Activated CD8-positive, alpha-beta memory T cell treated with anti-CD3 and anti-CD28 coated beads, Interleukin-2, amount 10 ng/mL, durations not matched to agents 7 days and 5 days (primary cell): ENCODE measurements at regions of chr5 and their contacts with region 1.

Region 1: DNA sequence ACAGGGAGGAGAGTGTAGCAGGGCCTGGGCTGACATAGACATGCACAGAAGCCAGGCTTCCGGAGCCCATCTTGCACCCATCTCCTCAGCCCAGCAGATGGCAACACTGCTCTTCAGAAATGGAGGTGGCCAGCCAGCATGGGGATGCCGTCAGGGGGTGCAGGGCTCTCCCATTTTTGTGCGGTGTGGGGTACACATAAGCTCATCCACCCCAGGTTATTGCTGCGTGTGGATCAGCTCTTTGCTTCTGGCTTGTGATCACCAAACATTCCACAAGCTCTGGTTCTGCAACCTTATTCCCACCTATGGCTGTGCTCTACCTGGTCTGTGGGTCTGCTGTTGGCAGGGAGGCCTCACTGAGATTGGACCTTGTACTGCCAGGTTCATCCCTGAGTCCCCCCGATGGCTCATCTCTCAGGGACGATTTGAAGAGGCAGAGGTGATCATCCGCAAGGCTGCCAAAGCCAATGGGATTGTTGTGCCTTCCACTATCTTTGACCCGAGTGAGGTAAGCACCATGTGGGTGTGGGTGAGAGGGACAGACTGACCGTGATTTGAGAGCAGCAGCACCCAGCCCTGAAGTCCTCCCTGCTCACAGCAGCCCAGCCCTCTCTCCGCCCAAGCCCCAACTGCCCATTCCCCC is 17.3 kb downstream of the SLC22A5 start:
- DNase-seq: peak; percentile 88
- ATAC-seq: peak; percentile 96
- H3K4me3 Mint-ChIP-seq: no peak overlapping the region
- H3K27ac Mint-ChIP-seq: peak overlapping the region; percentile 69
- H3K4me1 Mint-ChIP-seq: peaks cover 50% of the 10 kb centered on the region
- H3K27me3 Mint-ChIP-seq: no peaks in the 10 kb centered on the region

Region 2: GRCh38 chr5:132260714-132261551 is 125.8 kb before region 1 on chr5:
- CTCF ChIA-PET with region 1: no interaction called
- DNase-seq: peak; percentile 41
- ATAC-seq: peak; percentile 21
- H3K4me3 Mint-ChIP-seq: no peak overlapping the region
- H3K27ac Mint-ChIP-seq: no peak overlapping the region
- H3K4me1 Mint-ChIP-seq: peaks cover 20% of the 10 kb centered on the region
- H3K27me3 Mint-ChIP-seq: peaks cover 13% of the 10 kb centered on the region

Region 3: DNA sequence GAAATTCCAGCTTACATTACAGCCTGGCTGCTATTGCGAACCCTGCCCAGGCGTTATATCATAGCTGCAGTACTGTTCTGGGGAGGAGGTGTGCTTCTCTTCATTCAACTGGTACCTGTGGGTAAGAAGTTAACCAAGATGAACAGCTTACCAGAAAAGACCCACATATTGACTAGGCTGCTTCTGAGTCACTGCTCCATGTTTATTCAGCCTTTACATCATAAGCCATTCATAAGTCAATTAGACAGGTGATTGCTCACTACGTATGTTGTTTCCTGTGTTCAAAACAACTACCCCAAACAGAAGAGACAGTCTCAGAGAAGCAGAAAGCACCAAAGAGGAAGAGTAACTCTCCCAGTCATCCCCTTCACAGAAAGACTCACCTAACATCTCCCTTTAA is 52.0 kb before region 1 on chr5:
- CTCF ChIA-PET with region 1: no interaction called
- DNase-seq: no peak
- ATAC-seq: peak; percentile 64
- H3K4me3 Mint-ChIP-seq: no peak overlapping the region
- H3K27ac Mint-ChIP-seq: peak overlapping the region; percentile 35
- H3K4me1 Mint-ChIP-seq: peaks cover 6% of the 10 kb centered on the region
- H3K27me3 Mint-ChIP-seq: no peaks in the 10 kb centered on the region

Region 4: DNA sequence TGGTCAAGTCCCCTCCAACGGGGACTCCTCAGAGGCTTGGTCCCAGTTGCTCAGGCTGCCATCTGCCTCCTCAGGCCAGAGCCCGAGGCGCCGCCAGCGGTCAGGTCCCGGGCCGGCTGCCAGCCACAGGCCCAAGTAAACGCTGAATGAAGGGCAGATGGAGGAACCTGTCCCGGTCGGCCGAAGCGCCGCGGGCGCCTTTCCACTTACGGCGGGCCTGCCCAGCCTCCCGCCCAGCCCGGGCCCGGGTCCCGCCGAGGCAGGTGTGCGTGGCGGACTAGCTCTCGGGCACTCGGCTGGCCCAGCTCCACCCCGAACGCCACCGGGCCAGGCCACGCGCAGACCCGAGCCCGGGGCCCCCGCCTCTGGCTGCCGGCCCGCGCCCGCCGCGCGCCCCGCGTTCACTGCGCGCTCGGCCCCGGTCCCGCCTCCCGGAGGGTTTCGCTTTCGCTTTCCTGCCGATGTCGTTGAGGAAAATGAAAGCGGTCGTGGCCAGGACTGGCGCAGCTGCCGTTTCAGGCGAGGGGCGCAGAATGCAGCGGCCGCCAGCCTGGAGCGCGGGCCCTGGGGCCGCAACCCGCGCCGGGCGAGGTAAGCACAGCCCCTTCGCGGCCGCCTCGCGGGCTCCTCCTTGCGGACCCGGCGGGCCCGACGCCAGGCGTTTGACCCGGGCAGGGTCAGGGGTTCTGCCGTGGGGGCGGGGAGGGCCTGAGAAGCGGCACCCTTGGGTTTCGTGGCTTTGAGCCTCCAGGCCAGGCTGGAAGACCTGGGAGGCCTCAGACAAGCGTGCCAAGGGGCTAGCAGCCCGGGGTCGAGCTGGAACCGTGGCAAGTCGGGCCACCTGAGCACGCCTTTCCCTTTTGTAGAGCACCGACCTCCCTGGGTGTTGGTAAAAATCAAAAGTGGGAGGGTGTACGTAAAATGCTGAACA is 24.0 kb after region 1 on chr5:
- CTCF ChIA-PET with region 1: interaction called, 17 read pairs
- DNase-seq: peak; percentile 91
- ATAC-seq: peak; percentile 79
- H3K4me3 Mint-ChIP-seq: peak overlapping the region; percentile 97
- H3K27ac Mint-ChIP-seq: peak overlapping the region; percentile 99
- H3K4me1 Mint-ChIP-seq: peaks cover 58% of the 10 kb centered on the region
- H3K27me3 Mint-ChIP-seq: no peaks in the 10 kb centered on the region

Region 5: GRCh38 chr5:132506094-132506692 is 119.4 kb after region 1 on chr5:
- CTCF ChIA-PET with region 1: interaction called, 328 read pairs
- DNase-seq: no peak
- ATAC-seq: peak; percentile 62
- H3K4me3 Mint-ChIP-seq: no peak overlapping the region
- H3K27ac Mint-ChIP-seq: no peak overlapping the region
- H3K4me1 Mint-ChIP-seq: peaks cover 11% of the 10 kb centered on the region
- H3K27me3 Mint-ChIP-seq: peaks cover 13% of the 10 kb centered on the region